Activated CD4-positive, alpha-beta memory T cell treated with anti-CD3 and anti-CD28 coated beads for 36 hours (primary cell): ENCODE measurements at regions of chr9 and their contacts with region 1.

Region 1: GRCh38 chr9:26892251-26893029 is at the start of gene CAAP1:
- DNase-seq: peak; percentile 97
- H3K4me3 Mint-ChIP-seq: peak within 1 kb of the TSS; percentile 96
- H3K27ac Mint-ChIP-seq: peak within 1 kb of the TSS; percentile 99
- H3K4me1 Mint-ChIP-seq: peaks cover 28% of the 10 kb centered on the region
- H3K27me3 Mint-ChIP-seq: no peaks in the 10 kb centered on the region
- total RNA-seq, gene CAAP1: 18.2 to 18.8 TPM

Region 2: DNA sequence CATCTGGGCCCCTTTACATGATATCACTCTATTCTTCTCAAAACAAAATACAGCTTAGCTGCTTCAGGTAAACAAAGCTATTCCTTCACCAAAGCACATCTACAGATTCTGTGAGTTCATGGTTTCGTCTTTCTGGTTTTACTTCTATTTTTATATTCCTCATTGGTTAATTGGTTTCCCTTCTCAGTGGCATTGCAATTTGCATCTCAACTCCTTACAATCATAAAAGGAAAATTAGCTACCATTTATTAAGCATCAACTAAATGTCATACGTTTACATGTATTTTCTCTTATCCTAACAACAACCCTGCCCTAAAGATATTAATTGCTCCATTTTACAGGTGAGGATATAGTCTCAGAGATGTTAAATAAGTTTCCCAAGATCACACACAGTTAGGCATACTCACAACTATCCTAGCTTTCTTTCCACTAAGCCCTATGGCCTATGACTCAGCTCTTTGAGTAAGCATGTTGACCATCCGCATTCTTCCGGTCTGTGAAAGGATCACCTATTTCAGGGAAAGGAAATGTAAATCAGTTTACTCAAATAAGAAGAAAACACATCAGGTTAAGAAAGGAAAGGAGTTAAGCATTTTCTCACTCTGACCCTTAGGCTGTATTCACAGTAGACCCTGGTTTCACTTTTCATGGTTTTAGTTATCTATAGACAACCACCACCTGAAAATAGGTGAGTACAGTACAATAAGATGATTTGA is 145.9 kb before region 1 on chr9:
- CTCF ChIA-PET with region 1: no interaction called
- POLR2A ChIA-PET with region 1: no interaction called
- intact Hi-C with region 1: no loop called
- DNase-seq: no peak
- H3K4me3 Mint-ChIP-seq: no peak overlapping the region
- H3K27ac Mint-ChIP-seq: no peak overlapping the region
- H3K4me1 Mint-ChIP-seq: peaks cover 2% of the 10 kb centered on the region
- H3K27me3 Mint-ChIP-seq: peaks cover 3% of the 10 kb centered on the region

Region 3: DNA sequence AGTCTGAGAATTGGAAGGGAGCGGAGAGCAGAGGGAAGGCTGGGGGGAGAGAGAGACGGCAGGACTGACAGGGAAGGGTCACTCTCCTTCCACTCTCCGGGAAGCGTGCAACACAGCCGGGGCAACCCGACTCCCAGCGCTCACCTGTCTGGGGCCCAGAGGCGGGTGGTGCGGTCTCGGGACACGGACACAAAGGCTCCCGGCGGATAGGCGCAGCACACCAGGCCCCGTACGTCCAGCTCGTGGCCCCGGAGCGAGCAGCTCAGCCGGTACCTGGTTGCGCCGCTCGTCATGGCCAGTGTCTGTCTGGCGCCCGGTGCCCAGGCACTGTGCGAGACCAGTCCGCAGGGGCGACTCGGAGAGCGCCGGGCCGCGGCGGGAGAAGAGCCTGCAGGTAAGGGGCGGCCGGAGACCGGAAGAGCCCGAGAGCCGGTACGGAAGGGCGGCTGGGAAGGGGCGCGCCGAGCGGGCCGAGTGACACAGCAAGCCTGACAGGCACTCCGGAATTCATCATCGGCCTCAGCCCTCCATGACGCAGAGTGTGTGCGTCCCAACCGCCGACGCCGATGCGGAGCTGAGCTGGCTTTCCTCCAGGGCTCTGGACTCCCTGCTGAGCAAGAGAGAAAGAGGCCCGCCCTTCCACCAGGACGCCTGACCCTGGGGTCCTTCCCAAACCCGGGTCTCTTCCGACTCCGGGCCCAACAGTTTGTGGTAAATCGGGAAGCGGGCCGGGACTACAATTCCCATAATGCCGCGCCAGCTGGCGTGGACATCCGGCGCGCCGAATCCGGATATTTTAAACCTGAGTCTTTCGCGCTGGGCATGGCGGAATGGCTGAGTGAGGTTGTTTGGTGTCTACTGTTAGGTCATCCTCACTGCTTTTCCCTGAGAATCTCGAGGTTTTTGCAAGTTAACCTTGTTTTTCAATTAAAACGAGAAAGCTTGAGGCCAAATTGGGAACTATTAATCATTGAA is 54.6 kb after region 1 on chr9 and contains the start of gene PLAA:
- CTCF ChIA-PET with region 1: interaction called, 5 read pairs
- POLR2A ChIA-PET with region 1: interaction called, 25 read pairs
- intact Hi-C with region 1: loop called (anchors 1 kb)
- DNase-seq: peak; percentile 91
- H3K4me3 Mint-ChIP-seq: peak within 1 kb of the TSS; percentile 90
- H3K27ac Mint-ChIP-seq: peak within 1 kb of the TSS; percentile 98
- H3K4me1 Mint-ChIP-seq: peaks cover 46% of the 10 kb centered on the region
- H3K27me3 Mint-ChIP-seq: peaks cover 5% of the 10 kb centered on the region
- total RNA-seq, gene PLAA: 32.2 to 32.3 TPM

Region 4: GRCh38 chr9:26955921-26956859 is 63.8 kb after region 1 on chr9 and contains the start of gene IFT74:
- CTCF ChIA-PET with region 1: no interaction called
- POLR2A ChIA-PET with region 1: interaction called, 13 read pairs
- intact Hi-C with region 1: loop called (anchors 1 kb)
- DNase-seq: peak; percentile 96
- H3K4me3 Mint-ChIP-seq: peak within 1 kb of the TSS; percentile 85
- H3K27ac Mint-ChIP-seq: peak within 1 kb of the TSS; percentile 86
- H3K4me1 Mint-ChIP-seq: peaks cover 26% of the 10 kb centered on the region
- H3K27me3 Mint-ChIP-seq: no peaks in the 10 kb centered on the region
- total RNA-seq, gene IFT74: 10.9 to 11.2 TPM